Activated naive CD4-positive, alpha-beta T cell treated with anti-CD3 and anti-CD28 coated beads for 36 hours (primary cell): ENCODE measurements at regions of chr12 and their contacts with region 1.

Region 1: GRCh38 chr12:12999959-13000615 is at the start of gene HEBP1:
- DNase-seq: peak; percentile 97
- H3K4me3 Mint-ChIP-seq: peak within 1 kb of the TSS; percentile 77
- H3K27ac Mint-ChIP-seq: peak within 1 kb of the TSS; percentile 31
- H3K4me1 Mint-ChIP-seq: peaks cover 26% of the 10 kb centered on the region
- H3K27me3 Mint-ChIP-seq: peaks cover 6% of the 10 kb centered on the region
- total RNA-seq, gene HEBP1: 28.7 to 32.3 TPM

Region 2: DNA sequence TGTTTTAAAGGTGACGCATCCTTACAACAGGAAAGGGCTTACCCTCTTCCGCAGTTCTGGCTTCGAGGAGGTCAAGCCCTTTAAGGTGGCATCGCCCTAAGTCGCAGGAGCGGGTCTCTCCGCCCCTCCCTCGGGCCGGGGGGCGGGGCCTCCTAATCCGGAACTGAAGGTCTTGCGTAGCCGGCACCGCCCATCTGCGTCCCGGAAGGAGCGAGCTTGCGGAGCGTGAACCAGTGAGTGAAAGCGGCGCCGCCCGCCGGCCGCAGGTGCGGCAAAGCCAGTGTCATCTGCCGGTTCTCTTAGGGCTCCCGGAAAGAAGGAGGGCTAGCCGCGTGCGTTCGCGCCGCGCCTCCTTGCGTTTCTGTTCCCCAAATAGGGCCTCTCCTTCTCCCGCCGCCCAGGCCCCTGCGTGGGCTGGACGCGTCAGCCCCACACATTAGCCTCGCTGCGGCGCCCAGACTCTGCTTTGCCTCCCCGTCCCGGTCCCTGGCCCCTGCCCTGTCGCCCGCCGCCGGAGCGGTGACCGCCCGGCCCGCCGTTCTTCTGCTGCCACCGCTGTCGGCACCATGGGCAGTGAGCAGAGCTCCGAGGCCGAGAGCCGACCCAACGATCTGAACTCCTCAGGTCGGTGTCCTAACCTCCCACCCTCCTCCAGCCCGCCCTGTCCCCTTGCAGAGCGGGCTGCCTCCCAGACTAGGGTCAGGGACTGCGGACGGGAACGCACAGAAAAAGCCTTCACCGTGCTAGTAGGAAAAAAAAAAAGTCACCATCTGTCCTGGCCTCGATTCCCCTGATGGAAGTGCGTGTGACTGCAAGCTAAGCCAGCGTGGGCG is 643.0 kb before region 1 on chr12 and contains the start of gene BORCS5:
- CTCF ChIA-PET with region 1: no interaction called
- intact Hi-C with region 1: loop called (anchors 5 kb)
- DNase-seq: peak; percentile 98
- H3K4me3 Mint-ChIP-seq: peak within 1 kb of the TSS; percentile 81
- H3K27ac Mint-ChIP-seq: peak within 1 kb of the TSS; percentile 90
- H3K4me1 Mint-ChIP-seq: peaks cover 41% of the 10 kb centered on the region
- H3K27me3 Mint-ChIP-seq: no peaks in the 10 kb centered on the region
- total RNA-seq, gene BORCS5: 31.2 to 35.6 TPM

Region 3: DNA sequence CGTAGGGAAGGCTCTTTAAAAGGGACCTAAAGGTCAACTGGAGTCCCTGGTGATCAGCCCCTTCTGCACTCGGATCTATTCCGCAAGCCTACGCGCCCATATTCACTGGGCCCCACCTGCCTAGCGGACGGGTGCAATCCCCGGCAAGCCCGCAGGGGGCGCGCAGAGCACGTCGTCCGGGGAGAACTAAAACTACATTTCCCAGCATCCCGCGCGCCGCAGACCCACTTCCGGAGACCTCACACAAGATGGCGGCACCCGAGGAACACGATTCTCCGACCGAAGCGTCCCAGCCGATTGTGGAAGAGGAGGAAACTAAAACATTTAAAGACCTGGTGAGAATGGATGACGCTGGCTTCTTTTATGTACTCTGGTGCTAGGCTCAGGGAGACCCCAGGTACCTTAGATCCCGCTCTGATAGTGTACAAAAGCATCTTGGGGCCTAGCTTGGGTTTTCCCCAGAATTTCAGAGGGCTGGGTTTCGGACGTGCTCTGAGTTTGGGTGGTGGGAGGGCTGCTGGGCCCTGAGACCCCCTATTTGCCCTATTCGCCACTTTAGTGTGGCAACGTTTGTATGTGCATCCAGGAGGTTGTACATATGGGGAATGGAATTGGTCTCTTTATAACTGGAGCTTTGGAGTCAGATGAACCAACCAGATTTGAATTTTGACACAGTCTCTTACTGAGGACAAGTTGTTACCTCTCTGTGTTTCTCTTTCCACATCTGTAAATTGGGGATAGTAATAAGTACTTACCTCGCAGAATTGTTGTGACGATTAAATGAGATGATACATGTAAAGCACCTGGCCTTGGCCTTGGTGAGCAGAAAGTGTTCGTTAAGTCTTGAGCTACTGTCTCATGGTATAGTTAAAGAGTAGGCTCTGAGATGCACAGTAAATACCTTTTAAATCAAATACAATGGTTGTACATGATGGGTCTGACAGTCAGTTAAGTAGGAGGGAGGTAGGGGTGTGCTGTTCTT is 186.7 kb before region 1 on chr12 and contains the start of gene DDX47:
- CTCF ChIA-PET with region 1: no interaction called
- intact Hi-C with region 1: loop called (anchors 1 kb)
- DNase-seq: peak; percentile 99
- H3K4me3 Mint-ChIP-seq: peak within 1 kb of the TSS; percentile 99
- H3K27ac Mint-ChIP-seq: peak within 1 kb of the TSS; percentile 93
- H3K4me1 Mint-ChIP-seq: peaks cover 57% of the 10 kb centered on the region
- H3K27me3 Mint-ChIP-seq: no peaks in the 10 kb centered on the region
- total RNA-seq, gene DDX47: 86.6 to 87.3 TPM

Region 4: GRCh38 chr12:12881151-12881894 is 118.8 kb before region 1 on chr12:
- CTCF ChIA-PET with region 1: no interaction called
- intact Hi-C with region 1: no loop called
- DNase-seq: no peak
- H3K4me3 Mint-ChIP-seq: no peak overlapping the region
- H3K27ac Mint-ChIP-seq: no peak overlapping the region
- H3K4me1 Mint-ChIP-seq: peaks cover 8% of the 10 kb centered on the region
- H3K27me3 Mint-ChIP-seq: no peaks in the 10 kb centered on the region

Region 5: DNA sequence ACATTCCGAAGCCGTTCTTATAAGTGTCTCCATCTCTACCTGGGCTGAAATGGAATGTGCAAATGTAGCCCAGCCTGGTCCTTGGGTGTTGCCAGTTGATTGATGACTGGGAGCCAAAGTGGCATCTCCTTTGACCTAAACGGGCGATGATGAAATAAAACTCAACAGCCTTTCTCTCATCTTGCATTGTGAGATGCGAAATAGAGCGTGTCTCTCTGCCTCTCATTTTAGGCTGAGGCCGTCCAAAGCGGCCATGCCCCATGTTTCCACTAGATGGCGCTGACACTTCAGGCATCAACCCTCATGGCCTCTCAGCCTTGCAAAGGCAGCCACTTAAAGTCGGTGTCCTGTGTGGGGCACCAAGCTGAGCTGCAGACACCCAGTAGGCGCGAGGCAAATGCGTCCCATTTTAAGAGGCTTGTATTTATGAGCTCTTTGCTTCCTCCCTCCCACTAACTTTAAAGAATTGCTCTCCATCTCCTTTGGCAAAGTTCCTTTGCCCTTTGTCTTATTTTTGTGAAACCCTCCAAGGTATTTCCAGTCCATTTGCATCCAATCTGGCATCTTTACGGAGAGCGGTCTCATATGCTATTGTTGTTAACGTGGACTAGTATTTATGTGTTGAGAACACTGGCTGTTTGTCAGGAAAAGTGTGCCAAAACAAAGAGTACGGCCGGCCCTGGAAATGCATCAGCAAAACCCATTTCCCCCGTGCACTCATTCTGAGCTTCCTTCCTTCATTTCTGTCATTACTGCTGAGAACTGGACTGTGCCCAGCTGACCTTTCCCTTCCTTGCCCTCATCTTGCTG is 83.7 kb before region 1 on chr12:
- CTCF ChIA-PET with region 1: interaction called, 6 read pairs
- intact Hi-C with region 1: loop called (anchors 1 kb)
- DNase-seq: peak; percentile 94
- H3K4me3 Mint-ChIP-seq: no peak overlapping the region
- H3K27ac Mint-ChIP-seq: no peak overlapping the region
- H3K4me1 Mint-ChIP-seq: peaks cover 7% of the 10 kb centered on the region
- H3K27me3 Mint-ChIP-seq: peaks cover 6% of the 10 kb centered on the region

Region 6: DNA sequence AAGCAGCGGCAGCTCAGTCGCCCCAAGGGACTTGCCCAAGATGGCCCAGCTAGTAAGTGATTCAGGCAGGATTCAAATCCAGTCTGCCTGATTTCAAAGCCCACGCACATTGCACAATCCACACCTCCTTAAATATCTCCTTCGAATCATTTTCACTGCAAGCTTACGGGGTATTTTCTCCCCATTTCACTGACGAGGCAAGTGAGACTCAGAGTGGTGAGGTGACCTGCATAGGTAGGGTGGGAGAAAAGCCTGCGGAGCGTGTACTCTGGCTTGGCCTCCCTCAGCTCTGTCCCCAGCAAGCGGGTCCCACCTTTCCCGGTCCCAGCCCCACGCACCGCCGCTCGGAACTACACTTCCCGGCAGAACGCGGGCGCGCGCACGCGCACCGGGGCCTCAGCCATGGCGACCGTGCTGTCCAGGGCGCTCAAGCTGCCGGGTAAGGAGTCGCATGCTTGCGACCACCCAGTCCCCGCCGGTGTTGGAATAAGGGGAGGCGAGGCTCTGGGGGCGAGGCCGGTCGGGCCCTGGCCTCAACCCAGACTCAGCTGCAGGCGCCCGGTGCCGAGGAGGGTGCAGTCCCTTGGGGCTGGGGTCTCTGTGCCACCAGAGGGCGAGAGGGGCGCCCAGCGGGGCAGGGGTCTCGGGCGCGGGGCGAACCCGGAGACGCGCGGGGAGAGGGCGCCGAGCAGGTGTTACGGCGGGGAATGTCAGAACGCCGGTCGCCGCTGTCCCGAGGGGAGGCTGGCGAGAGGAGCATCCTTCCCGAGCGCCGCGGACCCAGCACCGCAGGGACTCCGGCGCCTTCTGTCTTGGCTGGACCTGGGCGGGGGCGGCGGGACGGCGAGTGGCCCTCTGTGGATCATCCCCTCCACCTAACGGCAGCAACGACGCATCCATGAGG is 44.2 kb after region 1 on chr12 and contains the start of gene FAM234B:
- CTCF ChIA-PET with region 1: interaction called, 3 read pairs
- intact Hi-C with region 1: loop called (anchors 1 kb)
- DNase-seq: peak; percentile 73
- H3K4me3 Mint-ChIP-seq: peak within 1 kb of the TSS; percentile 79
- H3K27ac Mint-ChIP-seq: no peak within 1 kb of the TSS
- H3K4me1 Mint-ChIP-seq: peaks cover 16% of the 10 kb centered on the region
- H3K27me3 Mint-ChIP-seq: no peaks in the 10 kb centered on the region
- total RNA-seq, gene FAM234B: 7.4 to 7.7 TPM

Region 7: DNA sequence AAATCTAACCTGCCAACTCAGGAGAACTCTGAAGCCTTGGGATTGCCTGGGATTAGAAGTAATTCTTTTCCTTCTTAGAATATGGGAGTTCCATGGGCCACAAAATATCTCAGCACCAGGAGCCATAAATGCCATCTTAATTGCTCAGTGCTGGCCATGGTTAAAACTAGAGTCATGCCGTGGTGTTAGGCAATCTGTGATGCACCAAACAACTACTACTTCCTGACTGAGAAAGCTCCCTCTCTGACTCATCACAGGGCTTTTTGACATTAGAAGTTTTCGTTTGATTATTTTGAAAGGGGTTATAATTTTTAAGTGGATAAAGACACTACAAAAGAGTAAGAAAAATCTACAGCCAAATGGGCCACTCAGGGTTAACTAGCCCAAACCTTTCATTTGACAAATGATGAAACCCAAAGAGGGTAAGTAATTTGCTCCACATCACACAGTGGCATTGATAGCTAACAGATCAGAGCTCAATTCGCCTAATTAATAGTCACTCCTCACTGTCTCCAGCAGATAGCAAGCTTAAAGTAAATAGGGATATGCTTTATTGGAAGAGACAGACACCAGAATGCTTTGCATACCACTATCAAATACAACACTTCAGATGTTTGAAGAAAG is 573.7 kb after region 1 on chr12:
- CTCF ChIA-PET with region 1: no interaction called
- intact Hi-C with region 1: no loop called
- DNase-seq: no peak
- H3K4me3 Mint-ChIP-seq: no peak overlapping the region
- H3K27ac Mint-ChIP-seq: no peak overlapping the region
- H3K4me1 Mint-ChIP-seq: no peaks in the 10 kb centered on the region
- H3K27me3 Mint-ChIP-seq: no peaks in the 10 kb centered on the region